AG04449 (cell line): ENCODE measurements at regions of chr17 and their contacts with region 1.

Region 1: DNA sequence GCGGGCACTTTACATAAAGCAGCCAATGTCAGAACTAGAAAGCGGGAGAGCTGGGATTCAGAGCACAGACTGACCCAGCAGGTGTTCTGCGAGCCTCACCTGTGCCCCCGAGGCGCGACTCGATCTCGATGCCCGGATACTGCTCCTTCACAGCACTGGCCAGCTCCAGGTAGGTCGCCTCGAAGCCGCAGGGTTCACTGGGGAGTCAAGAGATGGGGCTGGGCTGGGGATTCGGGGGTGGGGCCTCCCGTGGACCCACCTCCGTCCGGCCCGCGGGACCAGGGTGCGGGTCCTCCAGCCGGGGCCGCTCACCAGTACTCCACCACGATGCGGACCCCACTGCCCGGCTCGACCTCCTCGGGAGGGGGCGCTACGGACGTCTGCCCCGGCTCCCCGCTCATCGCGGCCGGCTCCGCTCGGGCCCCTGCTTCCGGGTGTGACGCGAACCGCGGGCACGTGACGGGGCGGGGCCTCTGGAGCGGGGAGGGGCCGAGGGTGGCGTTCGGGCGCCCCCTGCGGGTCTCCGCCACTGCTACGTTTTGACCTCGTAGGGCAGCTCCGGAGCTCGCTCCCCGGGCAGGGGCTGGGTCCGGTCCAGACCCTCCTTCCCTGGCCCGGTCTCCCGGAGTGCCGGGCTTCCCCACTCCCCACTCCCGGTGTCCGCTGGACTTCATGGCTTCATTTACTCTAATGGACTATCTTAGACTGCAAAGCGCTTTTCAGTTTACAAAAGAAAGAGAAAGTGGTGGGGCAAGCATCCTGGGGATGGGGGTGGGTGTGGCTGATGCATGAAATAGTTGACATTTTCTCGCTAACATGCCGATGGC is at the start of gene MIEN1:
- DNase-seq: no peak
- H3K4me3 ChIP-seq: peak within 1 kb of the TSS; percentile 76
- CTCF ChIP-seq: peak; percentile 84

Region 2: DNA sequence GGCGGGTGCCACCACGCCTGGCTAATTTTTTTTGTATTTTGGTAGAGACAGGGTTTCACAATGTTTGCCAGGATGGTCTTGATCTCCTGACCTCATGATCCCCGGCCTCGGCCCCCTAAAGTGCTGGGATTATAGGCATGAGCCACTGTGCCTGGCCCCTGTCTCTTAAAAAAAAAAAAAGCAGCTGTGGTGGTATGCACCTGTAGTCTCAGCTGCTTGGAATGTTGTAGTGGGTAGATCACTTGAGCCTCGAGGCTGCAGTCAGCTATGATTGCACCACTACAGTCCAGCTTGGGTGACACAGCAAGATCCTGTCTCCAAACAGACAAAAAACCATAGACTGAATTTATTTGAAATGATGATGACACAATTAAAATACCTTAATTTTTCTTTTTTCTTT is 244.8 kb before region 1 on chr17:
- CTCF ChIA-PET with region 1: no interaction called
- POLR2A ChIA-PET with region 1: no interaction called
- DNase-seq: peak; percentile 89
- H3K4me3 ChIP-seq: no peak overlapping the region
- CTCF ChIP-seq: no peak

Region 3: GRCh38 chr17:39699818-39700147 is 30.5 kb before region 1 on chr17 and contains the start of gene ERBB2:
- CTCF ChIA-PET with region 1: interaction called, 48 read pairs
- POLR2A ChIA-PET with region 1: interaction called, 13 read pairs
- DNase-seq: peak; percentile 31
- H3K4me3 ChIP-seq: peak within 1 kb of the TSS; percentile 78
- CTCF ChIP-seq: no peak

Region 4: GRCh38 chr17:39704821-39705551 is 25.3 kb before region 1 on chr17:
- CTCF ChIA-PET with region 1: interaction called, 48 read pairs
- POLR2A ChIA-PET with region 1: interaction called, 13 read pairs
- DNase-seq: no peak
- H3K4me3 ChIP-seq: no peak overlapping the region
- CTCF ChIP-seq: peak; percentile 34

Region 5: GRCh38 chr17:39716879-39717536 is 13.3 kb before region 1 on chr17:
- CTCF ChIA-PET with region 1: interaction called, 48 read pairs
- POLR2A ChIA-PET with region 1: interaction called, 3 read pairs
- DNase-seq: no peak
- H3K4me3 ChIP-seq: no peak overlapping the region
- CTCF ChIP-seq: no peak

Region 6: GRCh38 chr17:39744836-39745672 is 14.7 kb after region 1 on chr17:
- CTCF ChIA-PET with region 1: interaction called, 11 read pairs
- POLR2A ChIA-PET with region 1: no interaction called
- DNase-seq: no peak
- H3K4me3 ChIP-seq: no peak overlapping the region
- CTCF ChIP-seq: no peak

Region 7: GRCh38 chr17:39754161-39754951 is 24.0 kb after region 1 on chr17:
- CTCF ChIA-PET with region 1: interaction called, 14 read pairs
- POLR2A ChIA-PET with region 1: no interaction called
- DNase-seq: no peak
- H3K4me3 ChIP-seq: peak overlapping the region; percentile 69
- CTCF ChIP-seq: peak; percentile 92

Region 8: GRCh38 chr17:40098846-40099618 is 368.7 kb after region 1 on chr17:
- CTCF ChIA-PET with region 1: no interaction called
- POLR2A ChIA-PET with region 1: no interaction called
- DNase-seq: peak; percentile 94
- H3K4me3 ChIP-seq: peak overlapping the region; percentile 87
- CTCF ChIP-seq: no peak